Adrenal gland (tissue), 19 donors: ENCODE measurements at regions of chr20 and their contacts with region 1.

Region 1: DNA sequence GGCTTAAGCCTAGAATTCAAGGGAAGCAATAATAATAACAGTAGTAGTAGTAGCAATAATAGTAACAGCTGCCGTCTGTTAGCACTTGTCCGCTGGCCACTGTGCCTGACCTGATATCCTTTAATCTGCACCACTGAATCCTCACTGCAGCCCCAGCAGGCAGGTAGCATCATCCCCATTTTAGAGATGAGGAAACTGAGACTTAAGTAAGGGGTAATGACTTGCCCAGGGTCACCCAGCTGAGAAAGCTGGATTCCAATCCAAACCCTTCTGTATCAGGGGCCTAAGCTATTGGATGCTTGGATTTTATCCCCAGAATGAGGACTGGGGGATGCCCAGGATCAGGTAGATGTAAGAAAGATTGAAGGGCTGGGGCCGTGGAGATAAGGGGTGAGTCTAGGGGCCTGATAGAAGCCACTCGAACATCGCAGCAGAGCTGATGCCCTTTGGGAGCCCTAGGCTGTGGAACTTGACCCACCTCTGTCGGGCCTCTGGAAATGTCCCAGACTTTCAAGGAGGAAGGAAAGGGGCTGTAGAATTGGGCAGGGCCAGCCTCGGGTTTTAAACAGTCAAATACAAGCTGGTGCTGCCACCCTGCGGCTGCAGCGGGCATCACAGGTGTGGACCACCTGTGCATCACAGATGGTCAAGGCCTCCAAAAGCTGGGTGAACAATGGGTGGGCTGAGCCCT is 102.1 kb upstream of the MYL9 start:
- DNase-seq: peak; percentile 67 to 91 (median 82)
- H3K4me3 ChIP-seq: no peak overlapping the region
- H3K27ac ChIP-seq: no peak overlapping the region
- H3K4me1 ChIP-seq: peaks cover 0 to 6% of the 10 kb centered on the region in 2 donors
- H3K27me3 ChIP-seq: no peaks in the 10 kb centered on the region
- CTCF ChIP-seq: peak; percentile 79 to 93 (median 86)
- POLR2A ChIP-seq: no peak

Region 2: DNA sequence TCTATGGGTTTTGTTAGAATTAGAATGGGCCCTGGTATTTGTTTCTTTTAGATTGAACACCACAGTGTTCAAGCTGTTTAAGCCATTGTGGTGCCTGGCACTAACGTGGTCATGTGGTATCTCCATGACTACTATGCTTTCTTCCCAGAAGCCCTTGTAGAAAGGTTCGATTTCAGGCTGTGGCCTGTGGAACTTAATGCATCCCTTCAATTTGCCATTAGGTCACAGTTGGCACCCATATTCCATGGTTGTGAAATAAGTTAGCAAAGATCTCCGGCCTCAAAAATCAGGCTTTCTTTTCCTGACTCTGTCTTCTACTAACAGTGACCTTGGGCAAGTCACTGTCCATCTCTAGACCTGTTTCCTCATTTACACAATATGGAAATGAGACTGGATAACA is 234.2 kb before region 1 on chr20:
- intact Hi-C with region 1: loop called (anchors 2 to 5 kb)
- DNase-seq: peak in 1 of 7 donors; percentile 42
- H3K4me3 ChIP-seq: no peak overlapping the region
- H3K27ac ChIP-seq: peak overlapping the region in 2 of 5 donors; percentile 13 to 18
- H3K4me1 ChIP-seq: peaks cover 0 to 8% of the 10 kb centered on the region in 2 donors
- H3K27me3 ChIP-seq: no peaks in the 10 kb centered on the region
- CTCF ChIP-seq: no peak
- POLR2A ChIP-seq: no peak

Region 3: GRCh38 chr20:36214684-36215256 is 224.4 kb before region 1 on chr20:
- intact Hi-C with region 1: loop called in 1 of 2 experiments (anchors 5 kb)
- DNase-seq: no peak
- H3K4me3 ChIP-seq: no peak overlapping the region
- H3K27ac ChIP-seq: no peak overlapping the region
- H3K4me1 ChIP-seq: no peaks in the 10 kb centered on the region
- H3K27me3 ChIP-seq: no peaks in the 10 kb centered on the region
- CTCF ChIP-seq: peak in 5 of 6 experiments; percentile 31 to 46 (median 43)
- POLR2A ChIP-seq: no peak